Activated CD4-positive, alpha-beta T cell treated with anti-CD3 and anti-CD28 coated beads for 36 hours (primary cell): ENCODE measurements at regions of chr6 and their contacts with region 1.

Region 1: GRCh38 chr6:43629505-43630300 is 639 bp upstream of the GTPBP2 start:
- DNase-seq: peak; percentile 96
- ATAC-seq: peak; percentile 77
- H3K4me3 Mint-ChIP-seq: peak overlapping the region; percentile 88
- H3K27ac Mint-ChIP-seq: peak overlapping the region; percentile 100
- H3K4me1 Mint-ChIP-seq: peaks cover 33% of the 10 kb centered on the region
- H3K27me3 Mint-ChIP-seq: no peaks in the 10 kb centered on the region

Region 2: DNA sequence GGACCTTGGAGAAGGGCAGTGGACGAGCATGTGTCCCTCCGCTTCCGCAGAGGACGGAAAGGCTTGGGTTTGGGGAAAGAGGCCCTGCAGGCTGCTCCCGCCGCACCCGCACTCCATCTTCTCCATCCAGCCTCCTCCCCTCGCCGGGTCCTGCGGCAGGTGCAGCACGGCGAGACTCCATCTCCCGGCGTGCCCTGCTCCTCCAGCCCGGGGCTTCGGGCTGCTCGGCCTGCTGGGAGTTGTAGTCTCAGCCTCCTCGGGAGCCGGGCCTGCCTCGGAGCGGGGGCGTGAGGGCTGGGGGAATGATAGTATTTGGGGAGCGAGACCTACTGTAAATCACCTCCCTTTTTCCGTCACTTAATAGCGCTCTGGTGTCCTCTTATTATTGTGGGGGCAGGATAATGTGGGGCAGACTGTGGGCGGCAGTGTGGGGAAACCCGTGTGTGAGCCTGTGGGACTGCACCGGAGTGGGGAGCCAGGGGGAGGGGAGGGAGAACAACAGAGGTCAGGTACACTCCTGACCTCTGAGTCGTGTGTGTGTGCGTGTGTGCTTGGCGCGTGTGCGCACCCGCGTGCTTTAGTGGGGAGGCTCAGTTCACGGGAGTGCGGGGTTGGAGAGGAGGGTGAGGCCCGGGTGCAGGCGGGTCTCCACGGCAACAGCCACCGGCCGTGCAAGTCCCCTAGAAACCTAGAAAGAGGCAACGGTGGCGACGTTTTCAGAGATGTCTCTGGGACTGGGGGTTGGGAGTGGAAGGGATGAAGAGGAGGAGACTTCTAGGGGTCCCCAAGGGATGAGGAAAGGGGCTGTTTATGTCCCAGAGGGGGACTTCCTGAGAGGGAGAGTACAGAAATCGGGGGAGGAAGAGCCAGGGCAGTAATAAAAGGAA is 382.3 kb before region 1 on chr6:
- CTCF ChIA-PET with region 1: no interaction called
- POLR2A ChIA-PET with region 1: no interaction called
- intact Hi-C with region 1: loop called in 1 of 2 experiments (anchors 1 kb)
- DNase-seq: peak; percentile 94
- ATAC-seq: peak; percentile 99
- H3K4me3 Mint-ChIP-seq: peak overlapping the region; percentile 68
- H3K27ac Mint-ChIP-seq: peak overlapping the region; percentile 62
- H3K4me1 Mint-ChIP-seq: peaks cover 25% of the 10 kb centered on the region
- H3K27me3 Mint-ChIP-seq: peaks cover 14% of the 10 kb centered on the region

Region 3: DNA sequence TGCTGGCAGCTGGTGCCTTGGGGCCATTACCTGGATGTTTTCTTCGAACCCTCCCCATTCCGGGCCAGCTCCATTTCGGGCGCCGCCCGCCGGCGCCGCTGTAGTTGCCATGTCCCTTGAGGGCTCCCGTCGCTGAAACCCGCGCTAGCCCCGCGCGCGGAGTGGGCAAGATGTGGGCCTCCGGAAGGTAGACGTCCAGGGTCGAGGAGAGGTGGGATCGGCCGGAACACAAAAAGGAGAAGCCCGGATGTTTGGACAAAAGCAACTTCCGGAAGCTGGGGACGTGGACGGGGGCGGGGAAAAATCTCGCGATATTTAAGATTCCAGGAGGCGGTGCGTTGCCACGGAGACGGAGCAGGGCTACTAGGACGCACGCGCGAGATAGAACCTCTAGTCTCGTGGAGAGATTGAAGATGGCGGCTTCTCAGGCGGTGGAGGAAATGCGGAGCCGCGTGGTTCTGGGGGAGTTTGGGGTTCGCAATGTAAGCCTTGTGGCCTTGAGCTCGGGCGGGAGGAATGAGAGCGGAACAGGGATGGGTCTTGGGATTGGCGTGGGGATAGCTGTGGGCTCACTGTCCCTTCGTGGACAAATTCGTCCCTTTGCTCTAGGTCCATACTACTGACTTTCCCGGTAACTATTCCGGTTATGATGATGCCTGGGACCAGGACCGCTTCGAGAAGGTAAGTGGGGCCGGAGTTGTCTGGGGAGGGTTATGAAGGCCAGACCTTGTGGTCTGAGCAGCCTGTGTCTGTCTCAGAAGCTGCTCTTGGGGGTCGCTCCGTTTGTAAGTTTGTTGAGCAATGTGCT is 112.8 kb before region 1 on chr6 and contains the starts of genes POLR1C and YIPF3:
- CTCF ChIA-PET with region 1: no interaction called
- POLR2A ChIA-PET with region 1: no interaction called
- intact Hi-C with region 1: loop called in 1 of 2 experiments (anchors 1 kb)
- DNase-seq: peak; percentile 98
- ATAC-seq: peak; percentile 93
- H3K4me3 Mint-ChIP-seq: no peak within 1 kb of the TSS
- H3K27ac Mint-ChIP-seq: no peak within 1 kb of the TSS
- H3K4me1 Mint-ChIP-seq: peaks cover 32% of the 10 kb centered on the region
- H3K27me3 Mint-ChIP-seq: no peaks in the 10 kb centered on the region
- total RNA-seq, gene POLR1C: 43.4 to 52.9 TPM
- total RNA-seq, gene YIPF3: 38.0 to 39.6 TPM

Region 4: DNA sequence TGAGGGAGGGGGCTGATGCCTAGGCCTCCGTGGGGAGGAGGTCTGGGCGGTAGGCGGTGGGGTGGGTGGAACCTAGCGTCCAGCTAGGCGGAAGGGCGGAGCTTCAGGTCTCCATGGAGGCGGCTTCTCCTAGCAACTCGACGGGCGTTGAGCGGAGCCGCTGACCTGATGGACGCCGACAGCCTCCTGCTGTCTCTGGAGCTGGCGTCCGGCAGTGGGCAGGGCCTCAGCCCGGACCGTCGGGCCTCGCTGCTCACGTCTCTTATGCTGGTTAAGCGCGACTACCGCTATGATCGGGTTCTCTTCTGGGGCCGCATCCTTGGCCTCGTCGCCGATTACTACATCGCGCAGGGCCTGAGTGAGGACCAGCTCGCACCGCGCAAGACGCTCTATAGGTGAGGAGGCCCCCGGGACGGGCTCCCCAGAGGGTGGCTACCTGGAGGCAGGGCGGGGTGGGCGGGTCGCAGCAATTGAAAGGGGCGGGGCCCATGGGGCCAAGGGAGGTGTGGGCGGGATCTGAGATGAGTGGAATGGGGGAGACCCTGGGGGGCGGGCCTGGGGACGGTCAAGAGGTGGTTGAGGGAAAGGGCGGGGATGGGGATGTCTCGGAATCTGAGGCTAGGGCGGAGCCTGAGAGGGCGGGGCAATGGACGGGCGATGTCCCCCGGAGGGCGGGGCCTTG is 15.4 kb after region 1 on chr6 and contains the start of gene RSPH9:
- CTCF ChIA-PET with region 1: interaction called, 5 read pairs
- POLR2A ChIA-PET with region 1: interaction called, 4 read pairs
- intact Hi-C with region 1: loop called in 1 of 2 experiments (anchors 1 kb)
- DNase-seq: peak; percentile 86
- ATAC-seq: peak; percentile 92
- H3K4me3 Mint-ChIP-seq: peak within 1 kb of the TSS; percentile 71
- H3K27ac Mint-ChIP-seq: peak within 1 kb of the TSS; percentile 77
- H3K4me1 Mint-ChIP-seq: peaks cover 13% of the 10 kb centered on the region
- H3K27me3 Mint-ChIP-seq: no peaks in the 10 kb centered on the region
- total RNA-seq, gene RSPH9: not detected

Region 5: DNA sequence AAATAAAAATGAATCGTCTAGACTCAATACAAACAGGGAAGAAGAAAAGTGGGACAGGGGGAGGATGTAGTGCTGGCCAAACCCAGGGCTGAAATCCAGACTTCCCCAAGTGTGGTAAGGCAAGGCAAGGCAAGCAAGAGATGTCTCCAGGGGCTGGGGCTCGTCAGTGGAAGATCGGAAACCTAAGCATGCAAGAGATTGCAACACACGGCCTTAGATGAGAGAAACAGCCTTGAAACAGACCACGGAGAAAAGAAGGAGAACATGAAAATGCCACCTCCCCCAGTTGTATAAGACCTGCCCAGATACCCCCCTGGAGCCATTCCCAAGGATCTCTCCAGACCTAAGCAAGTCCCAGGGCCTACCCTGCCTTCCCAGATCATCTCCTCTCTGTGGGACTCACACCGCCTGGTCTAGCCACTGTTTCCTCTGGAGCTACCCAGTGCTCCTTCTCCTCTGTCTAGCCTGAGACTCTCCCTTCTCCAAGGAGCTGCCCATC is 160.4 kb after region 1 on chr6:
- CTCF ChIA-PET with region 1: no interaction called
- POLR2A ChIA-PET with region 1: no interaction called
- intact Hi-C with region 1: no loop called
- DNase-seq: no peak
- ATAC-seq: no peak
- H3K4me3 Mint-ChIP-seq: no peak overlapping the region
- H3K27ac Mint-ChIP-seq: no peak overlapping the region
- H3K4me1 Mint-ChIP-seq: no peaks in the 10 kb centered on the region
- H3K27me3 Mint-ChIP-seq: no peaks in the 10 kb centered on the region

Region 6: GRCh38 chr6:44246663-44247337 is 617.1 kb after region 1 on chr6 and contains the start of gene HSP90AB1:
- CTCF ChIA-PET with region 1: no interaction called
- POLR2A ChIA-PET with region 1: interaction called, 5 read pairs
- intact Hi-C with region 1: loop called in 1 of 2 experiments (anchors 1 kb)
- DNase-seq: peak; percentile 98
- ATAC-seq: peak; percentile 86
- H3K4me3 Mint-ChIP-seq: peak within 1 kb of the TSS; percentile 97
- H3K27ac Mint-ChIP-seq: peak within 1 kb of the TSS; percentile 99
- H3K4me1 Mint-ChIP-seq: peaks cover 44% of the 10 kb centered on the region
- H3K27me3 Mint-ChIP-seq: no peaks in the 10 kb centered on the region
- total RNA-seq, gene HSP90AB1: 2,120 to 2,263 TPM